ENCODE measurements at regions of chr14 and their contacts with region 1.

Region 1: GRCh38 chr14:23041729-23042128 is 283 bp upstream of the PSMB11 start:
- DNase-seq: no peak
- H3K4me3 ChIP-seq: no peak overlapping the region
- H3K27ac ChIP-seq: no peak overlapping the region
- H3K4me1 ChIP-seq: 0 out of 7 replicates have a peak, but pooled peaks cover 0 to 5% (median 0%) of the 10 kb centered on the region in 4 experiments
- H3K27me3 ChIP-seq: no peaks in the 10 kb centered on the region
- CTCF ChIP-seq: no peak
- EP300 ChIP-seq: no peak
- POLR2A ChIP-seq: no peak
- RAD21 ChIP-seq: no peak

Region 2: DNA sequence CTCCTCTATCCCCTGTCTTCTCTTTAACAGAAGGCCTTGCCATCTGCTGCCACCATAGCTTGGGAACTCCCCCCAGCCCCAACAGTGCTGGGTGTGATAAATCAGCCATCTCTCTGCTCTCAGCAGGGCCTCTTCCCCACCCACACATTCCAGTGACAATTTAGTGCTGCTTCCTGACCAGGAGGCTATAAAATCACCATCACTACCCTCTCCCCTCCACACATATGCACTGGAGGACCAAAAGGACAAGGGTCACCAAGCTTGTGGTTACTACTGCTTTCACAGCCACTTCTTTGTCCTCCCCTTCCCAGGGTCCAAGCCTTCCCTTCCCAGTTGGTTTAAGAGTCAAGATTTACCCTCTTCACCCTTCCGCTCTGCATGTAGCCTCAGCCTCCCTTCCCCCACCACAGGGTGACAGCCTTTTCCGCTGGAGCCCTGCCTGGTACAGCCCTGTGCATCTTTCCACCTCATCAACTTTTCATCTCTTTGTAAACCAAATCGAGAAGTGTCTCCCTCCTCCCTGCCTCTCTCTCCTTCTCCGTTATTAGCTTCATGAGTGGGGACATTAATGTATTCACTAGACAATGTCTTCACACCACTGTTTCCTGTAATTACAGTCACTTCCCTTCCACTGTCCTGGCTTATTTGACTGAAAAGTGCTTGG is 16.4 kb before region 1 on chr14:
- CTCF ChIA-PET with region 1: interaction called, 14 read pairs
- POLR2A ChIA-PET with region 1: interaction called, 8 read pairs
- DNase-seq: no peak
- H3K4me3 ChIP-seq: no peak overlapping the region
- H3K27ac ChIP-seq: no peak overlapping the region
- H3K4me1 ChIP-seq: peaks cover 0 to 3% (median under 1%) of the 10 kb centered on the region in 4 experiments; a peak in 1 of 7 replicates
- H3K27me3 ChIP-seq: no peaks in the 10 kb centered on the region
- CTCF ChIP-seq: no peak
- EP300 ChIP-seq: no peak
- POLR2A ChIP-seq: no peak
- RAD21 ChIP-seq: no peak